ENCODE measurements at regions of chr1 and their contacts with region 1.

Region 1: DNA sequence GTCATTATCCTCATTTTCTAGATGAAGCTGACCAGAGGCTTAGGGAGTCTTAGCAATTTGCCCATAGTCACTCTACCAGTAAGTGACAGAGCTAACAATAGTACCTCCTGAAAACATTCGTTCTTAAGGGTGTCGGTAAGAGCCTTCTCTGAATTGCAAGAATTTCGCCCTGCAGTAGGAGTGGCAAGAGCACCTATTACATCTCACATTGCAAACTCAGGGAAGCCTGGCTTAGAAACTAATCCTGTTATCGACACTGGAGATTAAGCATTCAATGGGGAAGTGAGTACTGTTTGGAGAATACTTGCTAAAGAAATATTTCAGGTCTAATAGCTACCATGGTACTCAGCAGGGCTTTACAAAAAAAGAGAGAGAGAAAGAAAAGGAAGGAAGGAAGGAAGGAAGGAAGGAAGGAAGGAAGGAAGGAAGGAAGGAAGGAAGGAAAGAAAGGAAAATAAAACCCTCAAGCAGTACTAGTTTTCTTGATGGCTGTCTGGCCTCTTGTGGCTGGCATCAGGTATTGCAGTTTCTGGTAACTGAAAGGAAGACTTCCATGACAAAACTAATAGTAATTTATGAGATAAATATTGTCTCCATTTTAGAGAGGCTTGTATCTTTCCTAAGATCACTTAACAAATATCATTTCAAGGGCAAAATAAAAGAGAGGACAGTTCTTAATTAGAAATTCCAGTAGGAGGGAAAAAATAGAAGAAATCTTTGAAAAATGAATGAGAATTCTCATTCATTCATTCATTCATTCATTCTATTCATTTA is 10.4 kb downstream of the C1orf226 start:
- ATAC-seq: peak; percentile 37 to 61 (median 42)
- H3K4me3 ChIP-seq: no peak overlapping the region
- H3K27ac ChIP-seq: no peak overlapping the region
- H3K4me1 ChIP-seq: peaks cover 29 to 36% of the 10 kb centered on the region in 2 donors

Region 2: GRCh38 chr1:162056043-162056442 is 335.9 kb before region 1 on chr1:
- in situ Hi-C with region 1: loop called in 1 of 9 experiments (anchors 10 kb)
- ATAC-seq: peak; percentile 92 to 100 (median 99)
- H3K4me3 ChIP-seq: no peak overlapping the region
- H3K27ac ChIP-seq: no peak overlapping the region
- H3K4me1 ChIP-seq: peaks cover 0 to 3% of the 10 kb centered on the region in 2 donors

Measured in motor neuron (in vitro differentiated cells).